Caco-2 (cell line): ENCODE measurements at regions of chr7 and their contacts with region 1.

Region 1: DNA sequence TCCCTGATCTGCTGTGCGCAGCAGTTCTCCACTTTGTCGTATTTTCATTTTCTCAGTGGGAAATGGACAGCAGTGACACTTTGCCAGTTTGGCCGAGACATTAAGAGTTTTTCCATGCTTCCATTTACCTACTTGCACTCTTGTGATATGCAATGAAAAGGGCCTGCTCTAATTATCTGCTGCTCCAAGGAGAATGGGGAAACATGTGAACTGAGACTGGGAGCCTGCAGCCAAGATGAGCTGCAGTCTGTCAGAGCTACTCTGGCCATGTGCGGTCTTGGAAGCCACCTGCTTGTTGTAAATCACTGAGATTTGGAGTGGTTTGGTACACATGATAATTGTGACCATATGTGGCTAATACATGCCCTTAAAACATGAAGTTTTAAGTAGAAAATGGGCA is 586.6 kb upstream of the POT1 start:
- DNase-seq: no peak
- H3K4me3 ChIP-seq: no peak overlapping the region
- H3K4me3 Mint-ChIP-seq: no peak overlapping the region
- H3K27ac Mint-ChIP-seq: no peak overlapping the region
- H3K4me1 ChIP-seq: no peaks in the 10 kb centered on the region
- H3K4me1 Mint-ChIP-seq: no peaks in the 10 kb centered on the region
- H3K27me3 ChIP-seq: no peaks in the 10 kb centered on the region
- H3K27me3 Mint-ChIP-seq: no peaks in the 10 kb centered on the region
- CTCF ChIP-seq: no peak

Region 2: DNA sequence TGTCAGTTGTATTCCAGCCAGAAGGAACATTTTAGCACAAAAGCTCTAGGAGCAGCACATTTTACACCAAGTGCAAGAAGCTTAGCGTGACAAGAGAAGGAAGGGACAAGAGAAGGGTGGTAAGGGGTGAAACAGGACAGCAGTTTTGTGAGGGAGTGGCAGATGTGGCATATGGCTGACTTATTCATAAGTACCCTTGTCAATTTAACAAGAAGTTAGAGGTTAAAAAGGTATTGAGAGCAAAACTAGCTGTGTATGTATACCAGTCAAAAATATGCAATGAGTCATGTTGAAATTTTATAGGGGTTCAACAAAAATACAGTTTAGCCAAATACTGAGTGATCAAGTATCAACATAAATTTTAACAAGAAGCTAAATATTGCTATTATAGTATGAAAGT is 25.1 kb before region 1 on chr7:
- CTCF ChIA-PET with region 1: no interaction called
- POLR2A ChIA-PET with region 1: no interaction called
- intact Hi-C with region 1: loop called (anchors 1 kb)
- DNase-seq: no peak
- H3K4me3 ChIP-seq: no peak overlapping the region
- H3K4me3 Mint-ChIP-seq: no peak overlapping the region
- H3K27ac Mint-ChIP-seq: no peak overlapping the region
- H3K4me1 ChIP-seq: no peaks in the 10 kb centered on the region
- H3K4me1 Mint-ChIP-seq: no peaks in the 10 kb centered on the region
- H3K27me3 ChIP-seq: no peaks in the 10 kb centered on the region
- H3K27me3 Mint-ChIP-seq: no peaks in the 10 kb centered on the region
- CTCF ChIP-seq: no peak

Region 3: DNA sequence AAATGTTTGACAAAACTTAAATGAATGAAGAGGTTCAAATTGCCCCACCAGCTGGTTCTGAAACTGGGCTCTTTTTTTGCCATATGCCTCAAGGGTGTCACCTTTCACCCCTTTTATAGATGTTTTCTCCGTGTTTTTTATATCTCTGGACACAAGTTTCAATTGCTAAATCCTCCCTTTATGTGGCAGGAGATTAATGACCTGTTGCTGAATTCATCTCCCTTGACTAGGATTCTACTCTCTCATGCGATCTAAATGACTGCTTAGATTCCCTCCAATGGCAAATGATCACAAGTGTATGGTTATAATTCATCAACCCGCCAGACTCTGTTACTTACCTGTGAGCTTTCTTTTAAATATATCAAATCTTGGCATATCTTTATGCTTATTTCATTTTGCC is 90.5 kb after region 1 on chr7:
- CTCF ChIA-PET with region 1: no interaction called
- POLR2A ChIA-PET with region 1: no interaction called
- intact Hi-C with region 1: no loop called
- DNase-seq: no peak
- H3K4me3 ChIP-seq: no peak overlapping the region
- H3K4me3 Mint-ChIP-seq: no peak overlapping the region
- H3K27ac Mint-ChIP-seq: no peak overlapping the region
- H3K4me1 ChIP-seq: no peaks in the 10 kb centered on the region
- H3K4me1 Mint-ChIP-seq: no peaks in the 10 kb centered on the region
- H3K27me3 ChIP-seq: no peaks in the 10 kb centered on the region
- H3K27me3 Mint-ChIP-seq: peaks cover 6% of the 10 kb centered on the region
- CTCF ChIP-seq: no peak

Region 4: GRCh38 chr7:125651823-125652528 is 135.8 kb after region 1 on chr7:
- CTCF ChIA-PET with region 1: no interaction called
- POLR2A ChIA-PET with region 1: no interaction called
- intact Hi-C with region 1: no loop called
- DNase-seq: no peak
- H3K4me3 ChIP-seq: no peak overlapping the region
- H3K4me3 Mint-ChIP-seq: no peak overlapping the region
- H3K27ac Mint-ChIP-seq: no peak overlapping the region
- H3K4me1 ChIP-seq: no peaks in the 10 kb centered on the region
- H3K4me1 Mint-ChIP-seq: no peaks in the 10 kb centered on the region
- H3K27me3 ChIP-seq: no peaks in the 10 kb centered on the region
- H3K27me3 Mint-ChIP-seq: peaks cover 2% of the 10 kb centered on the region
- CTCF ChIP-seq: no peak